Prostate gland (tissue), 2 donors: ENCODE measurements at regions of chr12 and their contacts with region 1.

Region 1: GRCh38 chr12:15151161-15152120 is 69.8 kb downstream of the RERG start:
- DNase-seq: peak; percentile 28
- H3K4me3 ChIP-seq: no peak overlapping the region
- H3K27ac ChIP-seq: peak overlapping the region in 1 of 2 donors; percentile 5
- H3K4me1 ChIP-seq: no peaks in the 10 kb centered on the region
- H3K27me3 ChIP-seq: no peaks in the 10 kb centered on the region
- CTCF ChIP-seq: peak in 3 of 4 experiments; percentile 61 to 79 (median 79)
- POLR2A ChIP-seq: no peak

Region 2: GRCh38 chr12:14970473-14970872 is 181.0 kb before region 1 on chr12:
- intact Hi-C with region 1: no loop called
- DNase-seq: no peak
- H3K4me3 ChIP-seq: no peak overlapping the region
- H3K27ac ChIP-seq: no peak overlapping the region
- H3K4me1 ChIP-seq: no peaks in the 10 kb centered on the region
- H3K27me3 ChIP-seq: no peaks in the 10 kb centered on the region
- CTCF ChIP-seq: no peak
- POLR2A ChIP-seq: no peak

Region 3: GRCh38 chr12:15011162-15011561 is 140.3 kb before region 1 on chr12:
- intact Hi-C with region 1: loop called (anchors 5 kb)
- DNase-seq: no peak
- H3K4me3 ChIP-seq: no peak overlapping the region
- H3K27ac ChIP-seq: no peak overlapping the region
- H3K4me1 ChIP-seq: no peaks in the 10 kb centered on the region
- H3K27me3 ChIP-seq: no peaks in the 10 kb centered on the region
- CTCF ChIP-seq: peak in 1 of 4 experiments; percentile 8
- POLR2A ChIP-seq: no peak

Region 4: GRCh38 chr12:15220994-15221885 is 69.8 kb after region 1 on chr12 and contains the start of gene RERG:
- intact Hi-C with region 1: loop called (anchors 1 kb)
- DNase-seq: peak; percentile 72
- H3K4me3 ChIP-seq: peak within 1 kb of the TSS; percentile 35 to 43
- H3K27ac ChIP-seq: peak within 1 kb of the TSS; percentile 69 to 70
- H3K4me1 ChIP-seq: no peaks in the 10 kb centered on the region
- H3K27me3 ChIP-seq: no peaks in the 10 kb centered on the region
- CTCF ChIP-seq: peak; percentile 93 to 97 (median 95)
- POLR2A ChIP-seq: no peak
- total RNA-seq, gene RERG: 12.7 to 13.3 TPM

Region 5: GRCh38 chr12:15268927-15269552 is 117.6 kb after region 1 on chr12:
- intact Hi-C with region 1: loop called (anchors 2 kb)
- DNase-seq: peak; percentile 38
- H3K4me3 ChIP-seq: no peak overlapping the region
- H3K27ac ChIP-seq: no peak overlapping the region
- H3K4me1 ChIP-seq: peaks cover under 1% of the 10 kb centered on the region
- H3K27me3 ChIP-seq: no peaks in the 10 kb centered on the region
- CTCF ChIP-seq: peak; percentile 64 to 87 (median 81)
- POLR2A ChIP-seq: no peak